ENCODE measurements at regions of chr6 and their contacts with region 1.

Region 1: DNA sequence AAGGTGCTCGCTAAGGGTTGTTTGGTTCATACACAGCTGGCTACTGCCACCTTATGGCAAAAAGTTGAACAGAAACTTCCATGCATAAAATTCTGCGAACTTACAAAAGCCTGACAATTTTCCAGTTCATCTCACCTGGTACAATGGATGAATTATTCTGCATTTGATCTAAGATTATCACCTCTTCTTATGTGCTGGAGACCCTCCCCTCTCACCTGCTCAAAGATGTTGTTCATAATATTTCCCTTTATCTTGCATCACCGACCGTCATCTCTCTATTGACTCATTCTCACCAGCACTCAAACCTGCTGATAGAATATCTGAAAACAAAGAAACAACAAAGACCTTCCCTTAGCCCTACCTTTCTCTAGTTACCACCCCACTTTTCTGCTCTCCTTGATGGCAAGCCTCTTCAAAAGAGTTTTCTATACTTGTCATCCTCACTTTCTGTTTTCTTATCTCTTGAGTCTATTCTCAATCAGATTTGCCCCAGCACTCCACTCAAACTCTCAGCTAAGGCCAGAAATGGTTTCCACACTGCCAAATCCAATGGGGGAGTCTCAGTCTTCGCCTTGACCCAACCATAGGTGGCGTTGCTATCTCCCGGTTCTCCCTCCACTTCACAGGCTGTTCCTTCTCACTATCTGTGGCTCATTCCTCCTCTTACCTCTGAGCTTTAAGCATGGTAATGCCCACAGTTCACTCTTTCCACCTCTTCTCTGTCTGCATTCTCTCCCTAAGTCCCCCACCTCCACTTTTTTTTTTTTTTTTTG is 25.8 kb downstream of the SNRNP48 start:
- DNase-seq: peak; percentile 37
- H3K4me3 Mint-ChIP-seq: no peak overlapping the region
- H3K27ac Mint-ChIP-seq: no peak overlapping the region
- H3K4me1 Mint-ChIP-seq: peaks cover 16% of the 10 kb centered on the region
- H3K27me3 Mint-ChIP-seq: peaks cover 5% of the 10 kb centered on the region

Region 2: DNA sequence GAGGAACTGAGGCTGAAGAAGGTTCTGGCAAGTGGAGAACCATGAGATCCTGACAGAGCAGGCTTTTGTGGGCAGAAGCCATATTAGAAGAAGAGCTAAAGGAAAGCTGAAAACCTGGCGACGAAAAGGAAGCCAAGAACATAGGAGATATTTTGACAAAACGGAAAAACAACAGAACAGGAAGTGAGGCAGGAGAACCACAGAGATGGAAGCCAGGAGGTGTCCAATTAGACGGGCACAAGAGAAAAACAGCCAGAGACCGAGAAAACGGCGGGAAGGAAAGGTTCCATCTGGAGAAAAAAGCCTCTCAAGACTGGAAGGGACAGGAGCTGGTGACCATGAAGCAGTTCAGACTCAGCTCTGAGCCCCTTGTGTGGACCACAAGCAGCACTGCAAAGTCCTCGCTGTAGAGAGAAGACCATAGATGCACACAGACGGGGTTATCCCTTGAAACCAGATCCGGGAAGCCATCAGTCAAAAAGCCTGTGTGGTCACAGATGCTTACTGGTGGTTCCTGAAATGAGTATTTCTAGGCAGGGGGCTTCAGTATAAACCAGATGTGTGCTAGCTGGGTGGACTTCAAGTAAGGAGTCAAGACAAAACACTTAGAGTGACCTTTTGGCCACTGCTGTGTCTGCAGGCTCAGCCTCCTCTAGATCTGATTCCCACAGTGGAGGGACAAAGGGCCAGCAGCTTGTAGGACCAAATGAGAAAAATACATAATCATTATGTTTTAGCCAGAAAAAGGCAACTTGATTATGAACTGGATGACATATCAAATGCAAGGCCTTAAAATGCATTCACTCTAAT is 333.5 kb before region 1 on chr6:
- CTCF ChIA-PET with region 1: interaction called, 59 read pairs
- POLR2A ChIA-PET with region 1: no interaction called
- DNase-seq: no peak
- H3K4me3 Mint-ChIP-seq: no peak overlapping the region
- H3K27ac Mint-ChIP-seq: peak overlapping the region; percentile 10
- H3K4me1 Mint-ChIP-seq: peaks cover 15% of the 10 kb centered on the region
- H3K27me3 Mint-ChIP-seq: no peaks in the 10 kb centered on the region

Region 3: DNA sequence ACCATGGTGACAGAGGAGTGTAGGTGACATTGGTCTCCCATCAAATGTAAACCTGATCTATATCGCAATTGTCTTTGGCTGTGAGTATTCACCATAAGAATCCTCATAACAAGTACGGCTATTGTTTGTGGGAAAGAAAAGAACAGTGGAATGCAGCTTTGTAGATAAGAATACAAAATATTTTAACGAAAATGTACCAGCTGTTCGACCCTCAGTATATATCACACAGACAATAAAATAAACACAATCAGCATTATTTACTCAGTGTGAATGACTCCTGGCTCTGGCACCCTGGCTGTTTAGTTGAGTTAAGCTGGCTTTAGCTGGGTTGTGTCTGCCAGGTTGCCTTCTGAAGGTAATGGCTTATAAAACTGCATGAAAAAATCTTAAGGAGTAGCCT is 17.6 kb after region 1 on chr6:
- CTCF ChIA-PET with region 1: no interaction called
- POLR2A ChIA-PET with region 1: no interaction called
- DNase-seq: no peak
- H3K4me3 Mint-ChIP-seq: no peak overlapping the region
- H3K27ac Mint-ChIP-seq: no peak overlapping the region
- H3K4me1 Mint-ChIP-seq: no peaks in the 10 kb centered on the region
- H3K27me3 Mint-ChIP-seq: peaks cover 5% of the 10 kb centered on the region